ENCODE measurements at regions of chr11 and their contacts with region 1.

Region 1: DNA sequence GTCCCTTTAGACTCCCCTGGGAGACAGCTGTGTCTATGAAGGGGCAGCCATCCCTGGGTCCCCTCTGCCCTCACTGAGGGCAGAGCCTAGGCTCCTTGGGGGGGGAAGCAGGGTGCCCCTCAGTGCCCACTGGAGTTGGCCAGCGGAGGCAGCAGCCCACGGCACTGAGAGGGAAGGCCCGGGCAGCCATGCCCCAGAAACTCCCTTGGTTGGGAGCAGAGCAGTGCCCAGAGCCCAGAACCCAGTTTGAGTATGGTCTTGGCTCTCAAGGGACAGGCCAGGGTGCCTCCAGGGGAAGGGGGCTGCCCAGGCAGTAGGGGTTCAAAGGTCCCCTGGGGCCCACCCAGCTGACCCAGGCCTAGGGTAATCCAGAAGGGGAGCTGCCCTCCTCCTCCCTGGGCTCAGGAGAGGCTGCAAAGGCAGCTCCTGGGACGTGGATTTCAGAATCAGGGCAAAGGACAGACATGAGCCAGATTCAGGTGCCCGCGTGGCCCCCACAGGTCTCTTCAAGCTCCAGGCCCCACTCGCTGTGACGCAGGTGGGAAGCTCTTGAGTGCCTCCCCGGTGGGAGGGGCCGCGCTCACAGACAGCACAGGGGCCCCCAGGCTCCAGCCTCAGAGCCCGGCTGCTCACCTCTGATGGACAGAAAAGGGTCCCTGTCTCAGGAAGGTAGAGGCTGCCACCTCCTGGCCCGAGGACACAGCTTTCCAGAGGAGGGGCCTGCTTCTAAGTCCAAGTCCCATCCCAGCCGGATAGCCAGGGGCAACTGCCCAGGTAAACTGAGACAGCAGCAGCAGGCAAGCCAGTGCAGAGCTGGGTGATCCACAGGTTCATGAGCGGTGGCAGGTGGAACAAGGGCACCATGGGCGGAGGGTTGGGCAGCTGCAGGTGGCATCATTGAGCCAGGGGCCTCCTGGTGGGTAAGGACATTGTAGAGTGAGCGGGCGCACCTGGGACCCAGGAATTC is 2.6 kb downstream of the C11orf21 start:
- DNase-seq: peak; percentile 54
- ATAC-seq: no peak
- H3K4me3 Mint-ChIP-seq: peak overlapping the region; percentile 76
- H3K27ac Mint-ChIP-seq: peak overlapping the region; percentile 77
- H3K4me1 Mint-ChIP-seq: peaks cover 50% of the 10 kb centered on the region
- H3K27me3 Mint-ChIP-seq: no peaks in the 10 kb centered on the region

Region 2: GRCh38 chr11:2186669-2187279 is 112.3 kb before region 1 on chr11:
- CTCF ChIA-PET with region 1: interaction called, 10 read pairs
- POLR2A ChIA-PET with region 1: no interaction called
- DNase-seq: peak; percentile 61
- ATAC-seq: peak; percentile 81
- H3K4me3 Mint-ChIP-seq: no peak overlapping the region
- H3K27ac Mint-ChIP-seq: no peak overlapping the region
- H3K4me1 Mint-ChIP-seq: no peaks in the 10 kb centered on the region
- H3K27me3 Mint-ChIP-seq: peaks cover 5% of the 10 kb centered on the region

Region 3: DNA sequence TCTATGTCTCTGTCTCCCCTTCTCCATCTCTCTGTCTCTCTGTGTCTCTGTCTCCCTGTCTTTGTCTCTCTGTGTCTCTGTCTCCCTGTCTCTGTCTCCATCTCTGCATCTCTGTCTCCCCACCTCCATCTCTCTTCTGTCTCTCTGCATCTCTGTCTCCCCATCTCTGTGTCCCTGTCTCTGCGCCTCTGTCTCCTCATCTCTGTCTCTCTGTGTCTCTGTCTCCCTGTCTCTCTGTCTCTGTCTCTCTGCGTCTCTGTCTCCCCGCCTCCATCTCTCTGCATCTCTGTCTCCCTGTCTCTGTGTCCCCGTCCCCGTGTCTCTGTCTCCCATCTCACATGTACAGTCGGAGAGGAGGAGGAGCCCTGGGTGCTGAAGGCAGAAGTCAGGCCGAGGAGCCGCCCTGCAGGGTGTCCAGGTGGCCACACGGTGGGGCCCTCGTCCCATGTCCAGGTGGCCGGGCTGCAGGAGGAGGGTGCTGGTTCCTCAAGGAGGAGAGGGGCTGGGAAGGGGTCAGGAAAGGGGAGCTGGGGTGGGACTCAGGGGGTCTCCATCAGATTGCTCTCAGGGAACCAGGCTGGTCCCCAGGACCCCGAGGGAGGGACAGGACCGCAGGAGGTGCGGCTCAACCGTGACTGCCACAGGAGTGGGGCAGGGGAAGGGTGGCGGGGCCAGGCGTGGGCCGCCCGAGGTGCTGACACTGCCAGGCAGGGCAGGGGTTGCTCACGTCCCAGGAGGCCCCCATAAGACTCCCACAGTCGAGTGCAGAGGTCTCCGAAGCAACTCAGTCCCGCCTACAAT is 101.9 kb before region 1 on chr11:
- CTCF ChIA-PET with region 1: interaction called, 17 read pairs
- POLR2A ChIA-PET with region 1: no interaction called
- DNase-seq: peak; percentile 86
- ATAC-seq: peak; percentile 88
- H3K4me3 Mint-ChIP-seq: no peak overlapping the region
- H3K27ac Mint-ChIP-seq: no peak overlapping the region
- H3K4me1 Mint-ChIP-seq: peaks cover 5% of the 10 kb centered on the region
- H3K27me3 Mint-ChIP-seq: peaks cover 12% of the 10 kb centered on the region

Region 4: DNA sequence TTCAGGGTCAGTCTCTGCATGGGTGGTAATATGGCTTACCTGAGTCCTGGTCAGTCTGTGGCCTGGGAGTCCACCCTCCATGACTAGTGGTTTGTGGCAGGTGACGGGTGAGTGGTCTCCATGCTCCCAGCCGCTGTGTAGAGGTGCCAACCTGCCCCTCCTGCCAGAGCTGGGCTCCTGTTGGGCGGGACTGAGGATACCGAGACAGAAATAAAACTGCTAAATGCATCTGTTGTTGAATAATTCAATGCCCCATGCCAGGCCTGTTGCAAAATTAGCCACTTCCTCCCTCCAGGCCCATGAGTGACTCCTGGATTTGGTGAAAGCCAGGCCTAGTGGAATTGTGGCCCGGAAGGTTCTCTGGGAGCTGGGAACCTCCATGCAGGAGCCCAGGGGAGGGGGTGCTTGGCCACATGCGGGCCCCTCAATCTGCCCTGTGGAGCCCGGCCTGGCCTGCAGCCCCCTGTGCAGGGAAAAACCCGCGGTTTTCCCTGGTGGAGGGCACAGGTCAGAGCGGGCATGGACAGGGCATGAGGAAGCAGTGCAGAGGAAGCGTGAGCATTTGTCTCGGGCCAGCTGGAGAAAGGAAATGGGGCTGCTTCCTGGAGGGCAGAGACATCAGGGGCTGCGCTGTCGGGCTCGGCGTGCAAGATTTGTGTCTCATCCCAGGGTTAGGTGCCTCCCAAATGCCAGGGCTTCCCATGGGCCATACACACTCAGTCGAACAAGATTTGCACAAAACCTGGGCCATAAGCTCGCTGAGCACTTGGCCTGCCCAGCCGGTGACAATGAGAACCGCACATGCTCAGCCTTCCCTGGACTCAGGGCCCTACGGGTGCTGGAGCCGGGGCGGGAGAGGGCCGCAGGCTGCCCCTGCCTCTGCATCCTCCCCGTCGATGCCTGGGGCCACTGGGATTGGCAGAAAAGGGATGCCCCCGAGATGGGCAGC is 212.6 kb after region 1 on chr11:
- CTCF ChIA-PET with region 1: no interaction called
- POLR2A ChIA-PET with region 1: no interaction called
- DNase-seq: no peak
- ATAC-seq: no peak
- H3K4me3 Mint-ChIP-seq: no peak overlapping the region
- H3K27ac Mint-ChIP-seq: no peak overlapping the region
- H3K4me1 Mint-ChIP-seq: peaks cover 23% of the 10 kb centered on the region
- H3K27me3 Mint-ChIP-seq: no peaks in the 10 kb centered on the region

Measured in activated CD8-positive, alpha-beta T cell treated with anti-CD3 and anti-CD28 coated beads, Interleukin-2, amount 10 ng/mL, durations not matched to agents 7 days and 5 days (primary cell).